HEK293T (cell line): ENCODE measurements at regions of chr6 and their contacts with region 1.

Region 1: GRCh38 chr6:30453508-30454116 is 35.7 kb upstream of the HLA-E start:
- DNase-seq: peak; percentile 97

Region 2: GRCh38 chr6:30441171-30441570 is 12.4 kb before region 1 on chr6:
- CTCF ChIA-PET with region 1: interaction called, 10 read pairs
- POLR2A ChIA-PET with region 1: no interaction called
- DNase-seq: no peak